CD8-positive, alpha-beta T cell (primary cell): ENCODE measurements at regions of chr16 and their contacts with region 1.

Region 1: DNA sequence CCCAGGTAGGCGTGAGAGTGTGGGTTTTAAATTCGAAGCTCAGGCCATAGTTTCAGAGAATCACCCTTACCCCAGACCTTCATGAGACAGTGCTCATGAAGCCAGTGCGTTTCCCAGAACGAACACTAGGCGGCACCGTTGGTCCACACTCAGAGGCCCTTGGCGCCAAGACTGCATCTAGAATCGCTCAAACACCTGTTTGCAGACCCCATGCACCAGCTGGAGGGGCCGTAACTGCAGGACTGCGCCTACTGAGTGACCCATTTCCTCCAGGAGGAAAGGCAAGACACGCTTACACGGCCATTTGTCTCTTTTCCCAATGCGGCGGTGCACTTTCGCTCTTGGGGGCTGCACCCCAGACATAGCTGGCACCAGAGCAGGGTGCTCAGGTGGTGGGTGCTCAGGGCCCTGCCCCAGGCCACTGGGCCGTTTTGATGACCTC is 34.0 kb downstream of the ADGRG5 start:
- DNase-seq: peak; percentile 71 to 92 (median 87)
- ATAC-seq: peak; percentile 86
- H3K4me3 ChIP-seq: no peak overlapping the region
- H3K4me3 Mint-ChIP-seq: no peak overlapping the region
- H3K27ac ChIP-seq: peak overlapping the region in 1 of 2 experiments; percentile 87
- H3K27ac Mint-ChIP-seq: no peak overlapping the region
- H3K4me1 ChIP-seq: peaks cover 33% of the 10 kb centered on the region
- H3K4me1 Mint-ChIP-seq: peaks cover 44% of the 10 kb centered on the region
- H3K27me3 ChIP-seq: no peaks in the 10 kb centered on the region
- H3K27me3 Mint-ChIP-seq: no peaks in the 10 kb centered on the region
- CTCF ChIP-seq: peak; percentile 96

Region 2: GRCh38 chr16:57535680-57536305 is 40.7 kb before region 1 on chr16:
- CTCF ChIA-PET with region 1: interaction called, 23 read pairs
- POLR2A ChIA-PET with region 1: no interaction called
- intact Hi-C with region 1: no loop called
- DNase-seq: peak; percentile 83 to 97 (median 92)
- ATAC-seq: peak; percentile 82
- H3K4me3 ChIP-seq: peak overlapping the region; percentile 69 to 80
- H3K4me3 Mint-ChIP-seq: peak overlapping the region; percentile 81
- H3K27ac ChIP-seq: peak overlapping the region; percentile 64 to 96
- H3K27ac Mint-ChIP-seq: peak overlapping the region; percentile 96
- H3K4me1 ChIP-seq: peaks cover 81% of the 10 kb centered on the region
- H3K4me1 Mint-ChIP-seq: peaks cover 70% of the 10 kb centered on the region
- H3K27me3 ChIP-seq: no peaks in the 10 kb centered on the region
- H3K27me3 Mint-ChIP-seq: no peaks in the 10 kb centered on the region
- CTCF ChIP-seq: no peak

Region 3: DNA sequence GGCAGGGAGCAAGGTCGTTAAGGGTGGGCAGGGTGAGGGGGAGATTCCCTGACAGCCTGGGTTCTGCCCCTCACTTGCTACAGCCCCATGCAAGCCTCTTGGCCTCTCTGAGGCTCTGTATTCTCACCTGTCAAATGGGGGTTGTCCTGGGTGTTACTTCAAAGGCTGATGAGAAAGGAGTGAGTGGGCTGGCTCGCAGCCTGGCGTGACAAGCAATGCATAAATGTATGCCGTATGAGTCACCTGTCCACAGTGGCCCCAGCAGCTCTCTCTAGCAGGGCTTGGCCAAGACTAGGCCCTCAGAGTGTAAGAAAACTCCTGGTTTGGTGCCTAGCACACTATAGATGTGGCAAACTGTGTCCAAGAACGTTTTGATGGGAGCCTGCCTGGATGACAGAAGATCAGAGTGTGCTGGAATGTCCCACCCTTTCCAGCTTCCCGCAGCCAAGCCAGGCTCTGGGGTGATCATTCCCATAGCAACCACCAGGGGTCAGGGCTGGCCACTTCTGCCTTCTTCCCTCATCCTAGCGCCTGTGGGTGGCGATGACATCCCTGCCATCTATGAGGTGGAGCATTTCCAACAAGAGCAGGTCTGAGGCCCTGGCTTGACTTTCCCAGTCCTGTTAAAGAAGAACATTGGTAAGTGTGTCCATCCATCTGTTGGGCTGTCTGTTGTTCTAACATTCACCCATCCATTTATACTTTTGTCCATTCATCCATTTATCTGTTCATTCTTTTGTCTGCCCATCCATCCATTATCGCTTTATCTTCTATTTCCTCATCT is 14.8 kb after region 1 on chr16:
- CTCF ChIA-PET with region 1: interaction called, 259 read pairs
- POLR2A ChIA-PET with region 1: interaction called, 3 read pairs
- intact Hi-C with region 1: loop called in 1 of 2 experiments (anchors 1 kb)
- DNase-seq: peak in 7 of 9 experiments; percentile 37 to 82 (median 61)
- ATAC-seq: peak; percentile 27
- H3K4me3 ChIP-seq: no peak overlapping the region
- H3K4me3 Mint-ChIP-seq: peak overlapping the region; percentile 66
- H3K27ac ChIP-seq: peak overlapping the region in 1 of 2 experiments; percentile 62
- H3K27ac Mint-ChIP-seq: peak overlapping the region; percentile 84
- H3K4me1 ChIP-seq: peaks cover 34% of the 10 kb centered on the region
- H3K4me1 Mint-ChIP-seq: peaks cover 47% of the 10 kb centered on the region
- H3K27me3 ChIP-seq: no peaks in the 10 kb centered on the region
- H3K27me3 Mint-ChIP-seq: no peaks in the 10 kb centered on the region
- CTCF ChIP-seq: peak; percentile 60

Region 4: DNA sequence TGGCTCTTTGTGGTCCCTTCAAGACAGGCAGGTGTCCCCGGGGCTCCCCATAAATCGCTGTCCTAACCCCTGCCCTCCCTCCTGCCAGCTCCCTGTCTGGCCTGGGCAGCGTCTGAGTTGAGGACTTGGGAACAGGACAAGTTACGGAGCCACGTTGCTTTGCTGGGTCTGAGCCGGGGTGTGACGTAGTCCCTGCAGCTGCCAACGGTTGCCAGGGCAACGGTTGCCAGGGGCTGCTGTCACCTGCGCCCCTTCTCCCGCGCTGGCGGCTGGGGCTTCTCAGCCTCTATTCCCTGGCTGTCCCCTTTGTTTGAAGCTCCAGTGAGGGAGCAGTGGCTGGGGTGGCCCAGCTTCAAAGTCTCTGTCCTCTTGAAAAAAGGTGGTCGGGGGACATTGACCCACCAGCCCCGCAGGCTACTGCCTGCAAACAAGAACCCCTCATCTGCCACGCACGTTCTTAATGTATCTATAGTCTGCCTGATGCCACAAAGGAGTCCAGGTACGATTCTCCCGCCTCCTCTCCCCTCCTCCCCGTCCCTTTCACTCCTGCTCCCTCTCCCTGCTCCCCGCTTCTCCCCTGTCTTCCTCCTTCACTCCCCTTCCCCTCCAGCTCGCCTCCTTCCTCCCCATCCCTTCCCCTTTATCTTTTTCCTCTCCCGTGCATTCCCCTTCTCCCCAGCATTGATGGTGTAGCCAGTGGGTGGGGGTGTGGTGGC is 62.9 kb after region 1 on chr16:
- CTCF ChIA-PET with region 1: interaction called, 101 read pairs
- POLR2A ChIA-PET with region 1: no interaction called
- intact Hi-C with region 1: no loop called
- DNase-seq: peak in 4 of 9 experiments; percentile 53 to 79 (median 61)
- ATAC-seq: peak; percentile 74
- H3K4me3 ChIP-seq: no peak overlapping the region
- H3K4me3 Mint-ChIP-seq: no peak overlapping the region
- H3K27ac ChIP-seq: no peak overlapping the region
- H3K27ac Mint-ChIP-seq: peak overlapping the region; percentile 45
- H3K4me1 ChIP-seq: peaks cover 6% of the 10 kb centered on the region
- H3K4me1 Mint-ChIP-seq: peaks cover 5% of the 10 kb centered on the region
- H3K27me3 ChIP-seq: no peaks in the 10 kb centered on the region
- H3K27me3 Mint-ChIP-seq: no peaks in the 10 kb centered on the region
- CTCF ChIP-seq: no peak

Region 5: DNA sequence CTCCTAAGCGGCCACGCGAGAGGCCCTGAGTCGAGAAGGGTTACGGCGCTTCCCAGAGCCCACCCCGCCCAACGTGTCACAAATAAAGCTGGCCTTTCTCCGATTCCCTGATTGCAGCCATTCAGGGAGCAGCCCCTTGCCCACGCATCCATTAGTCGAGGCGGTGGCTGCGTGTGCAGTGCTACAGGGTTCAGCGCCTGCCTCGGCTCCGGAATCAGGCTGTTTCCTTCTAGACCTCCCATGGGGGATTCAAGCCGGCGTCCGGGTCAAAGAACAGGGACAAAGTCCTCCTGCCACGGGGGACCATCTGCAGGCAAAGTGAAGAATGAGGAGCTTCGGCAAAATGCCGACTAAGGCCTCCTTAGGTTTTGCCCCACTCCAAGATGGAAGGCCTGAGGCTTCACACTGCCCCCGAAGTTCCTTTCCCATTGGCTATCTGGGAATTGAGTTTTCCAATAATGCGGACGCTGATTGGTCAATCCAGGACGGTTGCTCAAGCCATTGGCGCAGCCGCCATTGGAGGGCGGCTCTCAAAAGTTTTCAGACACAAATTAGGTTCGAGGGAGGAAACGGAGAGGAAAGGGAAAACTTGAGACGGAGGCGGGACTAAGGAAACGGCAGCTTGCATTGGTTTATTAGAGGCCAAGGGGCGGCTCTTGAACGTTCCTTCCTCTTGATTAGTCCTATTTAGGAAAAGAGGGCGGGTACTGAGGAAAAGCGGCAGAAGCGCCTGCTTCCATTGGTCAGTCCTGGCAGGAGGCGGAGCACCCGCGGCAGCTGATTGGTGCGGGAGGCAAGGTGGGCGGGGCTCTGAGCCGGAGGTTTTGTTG is 158.7 kb after region 1 on chr16:
- CTCF ChIA-PET with region 1: interaction called, 17 read pairs
- POLR2A ChIA-PET with region 1: no interaction called
- intact Hi-C with region 1: loop called in 1 of 2 experiments (anchors 5 kb)
- DNase-seq: peak; percentile 93 to 100 (median 98)
- ATAC-seq: peak; percentile 88
- H3K4me3 ChIP-seq: peak overlapping the region; percentile 84 to 99
- H3K4me3 Mint-ChIP-seq: peak overlapping the region; percentile 94
- H3K27ac ChIP-seq: peak overlapping the region; percentile 72 to 84
- H3K27ac Mint-ChIP-seq: peak overlapping the region; percentile 97
- H3K4me1 ChIP-seq: peaks cover 21% of the 10 kb centered on the region
- H3K4me1 Mint-ChIP-seq: peaks cover 30% of the 10 kb centered on the region
- H3K27me3 ChIP-seq: no peaks in the 10 kb centered on the region
- H3K27me3 Mint-ChIP-seq: no peaks in the 10 kb centered on the region
- CTCF ChIP-seq: no peak

Region 6: DNA sequence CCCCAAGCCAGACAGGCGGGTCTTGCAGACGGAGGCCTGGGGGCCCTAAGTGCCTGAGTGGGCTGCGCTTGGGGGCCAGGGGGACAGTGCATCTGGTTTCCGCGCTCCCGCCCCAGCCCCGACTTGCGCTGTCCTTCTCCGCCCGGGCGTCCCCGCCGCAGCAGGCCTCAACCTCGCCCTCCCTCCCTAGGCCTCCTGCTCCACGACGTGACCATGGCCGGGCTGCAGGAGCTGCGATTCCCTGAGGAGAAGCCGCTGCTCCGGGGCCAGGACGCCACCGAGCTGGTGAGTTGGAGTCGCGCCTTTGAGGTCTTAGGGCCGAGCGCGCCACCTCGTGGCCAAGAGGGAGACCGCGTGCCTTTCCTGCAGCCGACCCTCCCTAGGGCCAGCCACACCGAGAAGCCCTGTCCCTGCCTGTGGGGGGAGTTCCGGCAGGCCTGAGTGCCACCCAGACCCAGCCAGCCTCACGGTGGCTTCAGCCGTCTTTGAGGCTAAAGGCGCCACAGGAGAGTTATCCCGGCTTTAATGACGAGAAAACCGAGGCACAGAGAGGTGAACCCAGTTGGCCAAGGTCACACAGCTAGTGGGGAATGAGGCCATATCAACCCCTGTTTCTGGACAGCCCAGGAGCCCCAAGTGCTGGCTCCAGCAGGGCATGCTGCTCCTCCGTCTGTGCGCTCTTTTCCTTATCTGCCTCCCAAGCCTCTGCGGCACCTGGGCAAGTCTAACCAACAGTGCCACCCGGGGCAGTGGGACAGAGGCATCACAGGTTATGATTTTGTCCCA is 911.3 kb after region 1 on chr16:
- CTCF ChIA-PET with region 1: no interaction called
- POLR2A ChIA-PET with region 1: no interaction called
- intact Hi-C with region 1: loop called in 1 of 2 experiments (anchors 5 kb)
- DNase-seq: peak; percentile 42 to 83 (median 73)
- ATAC-seq: peak; percentile 83
- H3K4me3 ChIP-seq: no peak overlapping the region
- H3K4me3 Mint-ChIP-seq: no peak overlapping the region
- H3K27ac ChIP-seq: no peak overlapping the region
- H3K27ac Mint-ChIP-seq: no peak overlapping the region
- H3K4me1 ChIP-seq: no peaks in the 10 kb centered on the region
- H3K4me1 Mint-ChIP-seq: no peaks in the 10 kb centered on the region
- H3K27me3 ChIP-seq: peaks cover 0 to 7% of the 10 kb centered on the region in 2 experiments
- H3K27me3 Mint-ChIP-seq: peaks cover 3% of the 10 kb centered on the region
- CTCF ChIP-seq: peak; percentile 85

Region 7: DNA sequence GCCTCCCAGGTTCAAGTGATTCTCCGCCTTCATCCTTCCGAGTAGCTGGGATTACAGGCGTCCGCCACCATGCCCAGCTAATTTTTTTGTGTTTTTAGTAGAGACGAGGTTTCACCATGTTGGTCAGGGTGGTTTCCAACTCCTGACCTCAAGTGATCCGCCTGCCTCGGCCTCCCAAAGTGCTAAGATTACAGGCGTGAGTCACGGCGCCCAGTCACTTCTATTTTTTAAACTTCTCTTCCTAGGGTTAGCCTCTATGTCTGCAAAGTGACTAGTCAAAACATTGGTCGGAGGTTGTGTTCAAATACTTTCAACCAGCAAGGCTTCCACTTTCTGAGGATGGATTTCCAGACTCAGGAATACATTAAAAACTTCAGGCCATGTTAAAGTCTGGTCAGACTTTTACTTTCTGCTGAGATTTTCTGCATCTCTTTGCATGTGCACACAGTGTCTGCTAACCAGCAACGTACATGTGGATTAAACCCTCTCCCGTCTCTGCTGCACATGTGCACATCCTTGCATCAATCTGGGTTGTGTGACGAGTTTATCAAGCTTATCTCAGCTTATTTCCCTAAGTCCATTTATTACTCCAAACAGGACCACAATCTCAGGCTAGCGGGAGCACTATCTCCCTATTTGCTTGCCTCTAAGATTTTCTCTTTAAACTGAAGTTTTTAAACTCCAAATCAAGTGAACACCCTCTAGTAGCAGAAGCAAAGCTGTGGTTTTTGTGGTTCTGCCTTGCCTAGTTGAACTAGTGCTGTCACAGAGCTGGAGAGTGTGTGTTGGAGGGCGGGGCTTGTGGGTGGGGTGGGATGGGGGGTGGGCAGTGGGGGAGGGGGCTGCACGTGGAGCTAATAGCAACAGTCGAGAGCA is 1682.9 kb after region 1 on chr16:
- CTCF ChIA-PET with region 1: no interaction called
- POLR2A ChIA-PET with region 1: no interaction called
- intact Hi-C with region 1: no loop called
- DNase-seq: peak in 4 of 9 experiments; percentile 14 to 46 (median 34)
- ATAC-seq: peak; percentile 82
- H3K4me3 ChIP-seq: peak overlapping the region in 1 of 2 experiments; percentile 30
- H3K4me3 Mint-ChIP-seq: peak overlapping the region; percentile 79
- H3K27ac ChIP-seq: peak overlapping the region in 1 of 2 experiments; percentile 28
- H3K27ac Mint-ChIP-seq: peak overlapping the region; percentile 81
- H3K4me1 ChIP-seq: peaks cover 18% of the 10 kb centered on the region
- H3K4me1 Mint-ChIP-seq: peaks cover 29% of the 10 kb centered on the region
- H3K27me3 ChIP-seq: no peaks in the 10 kb centered on the region
- H3K27me3 Mint-ChIP-seq: no peaks in the 10 kb centered on the region
- CTCF ChIP-seq: no peak